ENCODE measurements at regions of chr12 and their contacts with region 1.

Region 1: DNA sequence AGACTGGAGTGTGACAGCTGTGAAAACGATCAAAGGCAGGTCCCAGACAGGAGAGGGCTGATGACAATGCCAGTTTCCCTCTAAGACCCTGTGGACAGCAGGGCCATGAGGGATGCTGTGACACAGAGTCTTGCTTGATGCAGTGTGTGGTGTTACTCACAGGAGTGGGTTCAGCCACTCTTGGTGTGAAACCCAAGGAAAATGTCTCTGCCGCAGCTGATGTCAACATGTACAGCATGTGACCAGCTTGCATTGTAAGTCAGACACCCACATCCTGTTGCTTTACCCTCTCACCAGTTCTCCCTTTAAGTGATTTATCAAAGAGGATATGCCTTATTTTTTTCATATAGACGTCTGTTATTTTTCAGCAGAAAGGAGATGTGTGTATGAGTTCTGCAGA is 268.6 kb downstream of the BTG1 start:
- DNase-seq: peak; percentile 51 to 97 (median 93)
- ATAC-seq: peak; percentile 94
- H3K4me3 ChIP-seq: peak overlapping the region; percentile 39
- H3K4me3 Mint-ChIP-seq: peak overlapping the region; percentile 77 to 88 (median 82)
- H3K27ac ChIP-seq: peak overlapping the region; percentile 92
- H3K27ac Mint-ChIP-seq: peak overlapping the region; percentile 95 to 100 (median 99)
- H3K4me1 ChIP-seq: peaks cover 59% of the 10 kb centered on the region in 2 donors
- H3K4me1 Mint-ChIP-seq: peaks cover 40 to 85% (median 80%) of the 10 kb centered on the region in 7 donors
- H3K27me3 ChIP-seq: no peaks in the 10 kb centered on the region
- H3K27me3 Mint-ChIP-seq: no peaks in the 10 kb centered on the region

Region 2: GRCh38 chr12:91577586-91578539 is 299.2 kb before region 1 on chr12:
- CTCF ChIA-PET with region 1: interaction called, 3 read pairs
- POLR2A ChIA-PET with region 1: interaction called, 8 read pairs
- intact Hi-C with region 1: loop called in 1 of 2 experiments (anchors 1 kb)
- DNase-seq: peak in 6 of 9 donors; percentile 30 to 53 (median 39)
- ATAC-seq: peak; percentile 88
- H3K4me3 ChIP-seq: peak overlapping the region; percentile 39
- H3K4me3 Mint-ChIP-seq: peak overlapping the region; percentile 16 to 93 (median 84)
- H3K27ac ChIP-seq: no peak overlapping the region
- H3K27ac Mint-ChIP-seq: peak overlapping the region; percentile 14 to 94 (median 81)
- H3K4me1 ChIP-seq: peaks cover 0 to 5% of the 10 kb centered on the region in 2 donors
- H3K4me1 Mint-ChIP-seq: peaks cover 12 to 36% (median 19%) of the 10 kb centered on the region in 7 donors
- H3K27me3 ChIP-seq: no peaks in the 10 kb centered on the region
- H3K27me3 Mint-ChIP-seq: peaks cover 0 to 3% (median 0%) of the 10 kb centered on the region in 5 donors

Region 3: DNA sequence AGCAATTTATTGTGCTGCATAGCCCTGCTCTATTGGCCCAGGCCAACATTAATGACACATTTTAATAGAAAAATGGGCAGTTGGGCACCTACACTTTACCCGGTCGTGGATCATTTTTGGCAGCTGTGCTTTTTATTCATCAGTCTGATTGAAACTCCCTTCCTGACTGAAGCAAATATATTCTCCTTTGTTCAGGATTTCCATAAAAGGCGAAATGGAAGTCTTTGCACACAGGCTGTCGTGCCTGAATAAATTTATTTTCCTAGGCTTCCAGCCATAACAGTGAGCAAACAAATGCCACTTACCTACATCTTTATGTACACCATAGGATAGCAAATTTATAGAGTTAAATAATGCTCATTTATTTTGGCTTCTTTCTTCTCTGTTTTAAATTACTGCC is 213.7 kb before region 1 on chr12:
- CTCF ChIA-PET with region 1: no interaction called
- POLR2A ChIA-PET with region 1: no interaction called
- intact Hi-C with region 1: no loop called
- DNase-seq: no peak
- ATAC-seq: no peak
- H3K4me3 ChIP-seq: no peak overlapping the region
- H3K4me3 Mint-ChIP-seq: no peak overlapping the region
- H3K27ac ChIP-seq: no peak overlapping the region
- H3K27ac Mint-ChIP-seq: no peak overlapping the region
- H3K4me1 ChIP-seq: no peaks in the 10 kb centered on the region
- H3K4me1 Mint-ChIP-seq: peaks cover 0 to 32% (median 28%) of the 10 kb centered on the region in 7 donors
- H3K27me3 ChIP-seq: no peaks in the 10 kb centered on the region
- H3K27me3 Mint-ChIP-seq: no peaks in the 10 kb centered on the region

Region 4: GRCh38 chr12:91866566-91866965 is 10.5 kb before region 1 on chr12:
- CTCF ChIA-PET with region 1: no interaction called
- POLR2A ChIA-PET with region 1: interaction called, 90 read pairs
- intact Hi-C with region 1: loop called in 1 of 2 experiments (anchors 1 kb)
- DNase-seq: no peak
- ATAC-seq: no peak
- H3K4me3 ChIP-seq: no peak overlapping the region
- H3K4me3 Mint-ChIP-seq: no peak overlapping the region
- H3K27ac ChIP-seq: no peak overlapping the region
- H3K27ac Mint-ChIP-seq: peak overlapping the region in 2 of 9 donors; percentile 14 to 65
- H3K4me1 ChIP-seq: peaks cover 19 to 37% of the 10 kb centered on the region in 2 donors
- H3K4me1 Mint-ChIP-seq: peaks cover 21 to 76% (median 66%) of the 10 kb centered on the region in 7 donors
- H3K27me3 ChIP-seq: no peaks in the 10 kb centered on the region
- H3K27me3 Mint-ChIP-seq: no peaks in the 10 kb centered on the region

Region 5: GRCh38 chr12:92034858-92035401 is 157.9 kb after region 1 on chr12:
- CTCF ChIA-PET with region 1: interaction called, 6 read pairs
- POLR2A ChIA-PET with region 1: interaction called, 46 read pairs
- intact Hi-C with region 1: loop called (anchors 1 kb)
- DNase-seq: peak; percentile 26 to 79 (median 71)
- ATAC-seq: peak; percentile 54
- H3K4me3 ChIP-seq: peak overlapping the region; percentile 52
- H3K4me3 Mint-ChIP-seq: peak overlapping the region; percentile 84 to 99 (median 91)
- H3K27ac ChIP-seq: peak overlapping the region; percentile 76
- H3K27ac Mint-ChIP-seq: peak overlapping the region; percentile 95 to 100 (median 99)
- H3K4me1 ChIP-seq: peaks cover 71 to 81% of the 10 kb centered on the region in 2 donors
- H3K4me1 Mint-ChIP-seq: peaks cover 49 to 100% (median 94%) of the 10 kb centered on the region in 7 donors
- H3K27me3 ChIP-seq: no peaks in the 10 kb centered on the region
- H3K27me3 Mint-ChIP-seq: no peaks in the 10 kb centered on the region

Region 6: DNA sequence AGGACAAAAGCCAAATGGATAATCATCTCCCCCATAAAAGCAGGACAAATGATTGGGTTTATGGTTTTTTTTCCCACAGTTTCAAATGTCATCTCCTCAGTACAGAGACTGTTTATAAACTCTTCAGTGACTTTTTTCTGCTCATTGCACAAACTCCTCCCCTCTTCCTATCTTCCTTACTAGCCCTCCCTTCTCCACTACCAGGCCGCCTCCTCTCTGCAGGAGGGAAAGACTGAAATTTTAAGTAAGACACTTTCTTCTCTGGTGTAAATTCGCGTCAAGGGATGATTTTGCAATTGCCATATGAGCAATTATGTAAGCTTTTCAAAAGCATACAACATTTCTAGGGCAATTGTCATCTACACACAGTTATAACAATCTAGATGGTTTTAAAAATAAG is 231.6 kb after region 1 on chr12:
- CTCF ChIA-PET with region 1: no interaction called
- POLR2A ChIA-PET with region 1: no interaction called
- intact Hi-C with region 1: no loop called
- DNase-seq: no peak
- ATAC-seq: peak; percentile 24
- H3K4me3 ChIP-seq: peak overlapping the region; percentile 14
- H3K4me3 Mint-ChIP-seq: peak overlapping the region in 9 of 10 donors; percentile 20 to 91 (median 68)
- H3K27ac ChIP-seq: peak overlapping the region; percentile 51
- H3K27ac Mint-ChIP-seq: peak overlapping the region in 8 of 9 donors; percentile 73 to 92 (median 84)
- H3K4me1 ChIP-seq: peaks cover 10 to 73% of the 10 kb centered on the region in 2 donors
- H3K4me1 Mint-ChIP-seq: peaks cover 55 to 93% (median 83%) of the 10 kb centered on the region in 7 donors
- H3K27me3 ChIP-seq: no peaks in the 10 kb centered on the region
- H3K27me3 Mint-ChIP-seq: no peaks in the 10 kb centered on the region

Region 7: DNA sequence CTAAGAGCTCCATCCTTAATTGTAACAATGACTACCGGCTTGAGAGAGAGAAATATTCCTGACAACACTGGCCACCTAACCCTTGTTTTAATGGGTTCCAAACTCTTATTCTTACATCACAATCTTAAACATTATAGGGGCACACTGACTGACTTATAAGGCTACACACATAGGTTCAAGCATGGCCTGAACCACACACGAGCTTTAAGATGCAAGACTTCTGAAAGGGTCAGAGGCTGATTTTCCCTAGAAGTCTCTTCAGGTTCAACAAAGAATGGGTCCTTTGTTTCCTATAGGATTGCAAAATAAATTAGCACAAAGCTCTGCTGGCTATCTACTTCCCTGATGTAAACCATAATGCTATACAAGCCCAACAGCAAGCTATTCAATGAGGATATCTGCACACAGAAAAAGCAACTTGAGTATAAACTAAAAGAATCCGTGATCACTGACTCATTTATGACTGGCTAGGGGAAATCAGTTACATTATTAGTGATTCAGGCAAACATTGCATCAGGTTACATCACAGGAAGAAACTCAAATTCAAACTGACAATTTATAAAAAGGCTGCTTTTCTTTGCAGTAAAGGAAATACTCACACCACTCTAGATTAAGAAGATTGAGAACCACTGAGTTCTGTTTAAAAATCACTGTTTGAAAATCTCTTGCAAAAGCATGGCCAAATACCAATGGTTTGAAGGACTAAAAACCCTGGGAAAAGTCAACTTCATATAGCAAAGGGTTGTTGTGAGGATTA is 260.1 kb after region 1 on chr12:
- CTCF ChIA-PET with region 1: no interaction called
- POLR2A ChIA-PET with region 1: interaction called, 193 read pairs
- intact Hi-C with region 1: loop called in 1 of 2 experiments (anchors 2 kb)
- DNase-seq: peak in 2 of 9 donors; percentile 34 to 40
- ATAC-seq: peak; percentile 12
- H3K4me3 ChIP-seq: peak overlapping the region; percentile 98
- H3K4me3 Mint-ChIP-seq: peak overlapping the region; percentile 94 to 100 (median 98)
- H3K27ac ChIP-seq: peak overlapping the region; percentile 91
- H3K27ac Mint-ChIP-seq: peak overlapping the region; percentile 91 to 100 (median 98)
- H3K4me1 ChIP-seq: peaks cover 34 to 39% of the 10 kb centered on the region in 2 donors
- H3K4me1 Mint-ChIP-seq: peaks cover 46 to 74% (median 51%) of the 10 kb centered on the region in 7 donors
- H3K27me3 ChIP-seq: no peaks in the 10 kb centered on the region
- H3K27me3 Mint-ChIP-seq: no peaks in the 10 kb centered on the region

Region 8: DNA sequence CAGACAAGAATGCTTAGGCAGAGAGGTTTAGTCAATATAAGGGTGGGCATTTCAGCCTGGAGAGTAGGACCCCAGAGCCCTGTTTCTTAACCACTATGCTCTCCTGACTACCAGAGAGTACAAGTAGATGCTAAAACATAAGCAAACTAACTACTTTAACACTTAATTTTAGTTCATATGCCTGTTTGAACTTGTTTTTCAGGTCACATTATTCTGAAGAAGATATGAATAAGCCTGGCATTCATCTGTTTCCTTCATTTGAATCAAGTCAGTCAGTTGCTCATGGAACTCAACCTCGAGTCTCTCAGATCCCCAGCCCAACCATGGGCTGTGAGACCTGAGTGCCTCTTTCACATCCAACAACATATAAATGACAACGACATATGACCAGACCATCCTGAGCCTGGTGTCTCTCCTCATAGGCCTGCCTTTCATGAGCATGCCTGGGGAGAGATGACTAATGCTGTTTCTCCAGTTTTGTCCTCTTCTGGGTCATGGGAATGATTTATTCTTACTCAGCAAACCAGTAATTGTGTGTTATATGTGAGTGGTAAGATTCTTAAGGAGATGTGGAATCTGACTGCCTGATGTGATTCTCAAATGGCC is 519.7 kb after region 1 on chr12:
- CTCF ChIA-PET with region 1: no interaction called
- POLR2A ChIA-PET with region 1: interaction called, 7 read pairs
- intact Hi-C with region 1: loop called in 1 of 2 experiments (anchors 2 kb)
- DNase-seq: no peak
- ATAC-seq: no peak
- H3K4me3 ChIP-seq: no peak overlapping the region
- H3K4me3 Mint-ChIP-seq: peak overlapping the region in 8 of 10 donors; percentile 9 to 76 (median 62)
- H3K27ac ChIP-seq: peak overlapping the region; percentile 85
- H3K27ac Mint-ChIP-seq: peak overlapping the region; percentile 90 to 100 (median 98)
- H3K4me1 ChIP-seq: peaks cover 76 to 84% of the 10 kb centered on the region in 2 donors
- H3K4me1 Mint-ChIP-seq: peaks cover 56 to 100% (median 93%) of the 10 kb centered on the region in 7 donors
- H3K27me3 ChIP-seq: no peaks in the 10 kb centered on the region
- H3K27me3 Mint-ChIP-seq: no peaks in the 10 kb centered on the region

Region 9: GRCh38 chr12:92928962-92929915 is 1052.2 kb after region 1 on chr12 and contains the start of gene EEA1:
- CTCF ChIA-PET with region 1: no interaction called
- POLR2A ChIA-PET with region 1: no interaction called
- intact Hi-C with region 1: loop called in 1 of 2 experiments (anchors 5 kb)
- DNase-seq: peak; percentile 89 to 96 (median 91)
- ATAC-seq: peak; percentile 93
- H3K4me3 ChIP-seq: peak within 1 kb of the TSS; percentile 71
- H3K4me3 Mint-ChIP-seq: peak within 1 kb of the TSS; percentile 75 to 94 (median 91)
- H3K27ac ChIP-seq: peak within 1 kb of the TSS; percentile 96
- H3K27ac Mint-ChIP-seq: peak within 1 kb of the TSS; percentile 89 to 99 (median 93)
- H3K4me1 ChIP-seq: peaks cover 19 to 23% of the 10 kb centered on the region in 2 donors
- H3K4me1 Mint-ChIP-seq: peaks cover 20 to 53% (median 37%) of the 10 kb centered on the region in 7 donors
- H3K27me3 ChIP-seq: no peaks in the 10 kb centered on the region
- H3K27me3 Mint-ChIP-seq: peaks cover 0 to 6% (median 0%) of the 10 kb centered on the region in 5 donors
- total RNA-seq, gene EEA1: 20.9 to 28.3 (median 27.9) TPM

Measured in naive thymus-derived CD4-positive, alpha-beta T cell (primary cell).